Activated T-helper 1 cell treated with anti-CD3 and anti-CD28 coated beads, Interleukin-12 subunit alpha, Interleukin-12 subunit beta, Interleukin-2, Interleukin-4 antibody, amounts not matched to agents 30 ng/mL and 10 ng/mL and 1 ng/mL, durations not matched to agents 14 hours and 24 hours and 36 hours (primary cell): ENCODE measurements at regions of chr7 and their contacts with region 1.

Region 1: DNA sequence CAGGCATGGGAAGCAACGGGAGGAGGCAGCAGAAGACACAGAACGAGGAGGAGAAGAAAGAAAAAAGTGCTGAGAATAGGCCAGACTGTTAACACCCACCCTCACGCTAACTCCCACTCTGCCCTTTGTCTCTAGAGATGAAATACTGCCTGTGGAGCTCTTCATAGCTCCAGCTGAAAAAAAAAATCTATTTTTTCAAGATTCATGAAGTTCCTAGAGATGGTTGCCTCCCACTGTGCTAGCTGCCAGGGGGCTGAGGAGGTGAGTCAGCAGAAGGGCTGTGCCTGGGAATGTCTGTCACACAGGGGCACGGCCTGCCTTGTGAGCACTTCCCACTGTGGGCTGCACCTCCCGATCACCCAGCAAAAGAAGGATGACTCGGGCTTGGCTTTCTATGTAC is 144.5 kb downstream of the RNF216 start:
- DNase-seq: no peak
- H3K4me3 Mint-ChIP-seq: no peak overlapping the region
- H3K27ac Mint-ChIP-seq: no peak overlapping the region
- H3K4me1 Mint-ChIP-seq: peaks cover 5% of the 10 kb centered on the region
- H3K27me3 Mint-ChIP-seq: peaks cover 2% of the 10 kb centered on the region

Region 2: DNA sequence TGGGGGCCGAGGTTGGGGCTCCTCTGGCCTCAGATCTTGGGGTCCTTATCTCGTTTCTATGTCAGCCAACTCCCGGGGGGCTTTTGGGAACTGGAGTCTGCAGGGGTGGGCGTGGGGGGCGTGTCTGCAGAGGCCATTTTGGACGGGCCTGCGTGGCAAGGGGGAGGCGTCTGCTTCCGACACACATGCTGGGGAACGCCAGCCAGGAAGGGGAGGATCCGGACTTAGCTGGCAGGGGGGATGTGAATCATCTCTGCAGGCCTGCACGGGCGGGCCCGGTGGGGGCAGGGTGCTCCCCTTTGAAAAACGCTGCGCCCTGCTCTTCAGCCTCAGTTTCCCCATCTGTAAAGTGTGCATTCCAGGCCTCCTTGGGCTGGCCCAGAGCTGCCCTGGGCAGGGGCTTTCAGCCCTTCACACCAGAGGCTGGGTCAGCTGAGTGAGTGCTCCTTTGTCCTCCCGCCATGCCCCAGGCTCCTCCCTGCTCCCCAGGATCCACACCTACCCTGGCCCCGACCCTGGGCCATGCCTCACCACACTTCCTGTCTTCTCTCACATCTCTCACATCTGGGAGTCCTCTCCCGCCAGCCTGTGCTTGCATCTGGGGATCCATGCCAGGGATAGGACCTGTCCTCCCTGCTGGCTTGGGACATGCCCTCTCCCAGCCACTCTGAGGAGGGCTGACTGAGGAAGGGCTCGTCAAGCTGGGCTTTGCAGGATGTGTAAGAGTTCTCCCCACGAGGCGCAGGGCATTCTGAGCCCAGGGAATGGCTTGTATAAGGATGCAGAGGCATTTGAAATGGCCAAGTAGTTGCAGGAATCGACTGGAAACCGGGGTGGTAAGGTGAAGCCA is 40.6 kb before region 1 on chr7:
- intact Hi-C with region 1: loop called (anchors 5 kb)
- DNase-seq: peak; percentile 56
- H3K4me3 Mint-ChIP-seq: peak overlapping the region; percentile 75
- H3K27ac Mint-ChIP-seq: peak overlapping the region; percentile 91
- H3K4me1 Mint-ChIP-seq: peaks cover 21% of the 10 kb centered on the region
- H3K27me3 Mint-ChIP-seq: peaks cover 17% of the 10 kb centered on the region

Region 3: DNA sequence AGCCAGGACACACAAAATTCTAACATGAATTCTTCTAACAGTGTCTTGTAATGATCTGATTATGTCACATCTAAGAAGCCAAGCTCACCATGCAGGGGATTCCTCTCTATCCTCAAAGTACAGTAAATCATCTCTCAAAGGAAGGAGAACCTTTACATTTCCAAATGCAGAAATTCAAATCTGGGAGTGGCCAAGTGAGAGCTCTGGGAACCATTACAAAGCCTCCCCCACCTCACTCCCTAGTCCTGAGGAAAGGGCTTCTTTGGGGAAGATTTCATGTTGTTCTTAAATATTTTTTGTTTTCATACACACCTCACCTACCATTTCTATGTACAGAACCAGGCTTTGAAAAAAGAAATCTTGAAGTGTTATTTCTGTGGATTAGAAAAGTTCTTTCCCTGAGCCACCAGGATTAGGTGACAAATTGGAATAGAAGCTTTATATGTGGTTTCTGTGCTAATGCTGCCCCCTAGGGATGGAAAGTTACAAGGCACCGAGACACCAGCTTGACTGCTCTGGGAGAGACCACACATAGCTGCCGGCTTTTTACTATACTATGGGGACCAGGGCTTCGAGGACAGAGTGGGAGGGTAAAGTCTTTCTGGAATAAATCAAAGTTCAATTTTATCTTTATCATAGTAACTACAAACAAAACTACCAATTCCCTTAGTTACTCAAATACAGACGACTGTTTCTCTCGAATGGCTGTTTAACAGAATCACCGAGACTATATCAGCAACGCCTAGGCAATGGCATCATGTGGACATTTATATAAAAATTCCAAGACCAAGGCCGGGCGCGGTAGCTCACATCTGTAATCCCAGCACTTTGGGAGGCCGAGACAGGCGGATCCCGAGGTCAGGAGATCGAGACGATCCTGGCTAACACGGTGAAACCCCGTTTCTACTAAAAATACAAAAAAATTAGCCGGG is 28.4 kb after region 1 on chr7:
- intact Hi-C with region 1: loop called (anchors 2 kb)
- DNase-seq: peak; percentile 59
- H3K4me3 Mint-ChIP-seq: no peak overlapping the region
- H3K27ac Mint-ChIP-seq: no peak overlapping the region
- H3K4me1 Mint-ChIP-seq: peaks cover 23% of the 10 kb centered on the region
- H3K27me3 Mint-ChIP-seq: no peaks in the 10 kb centered on the region

Region 4: GRCh38 chr7:5689118-5689517 is 52.2 kb after region 1 on chr7:
- intact Hi-C with region 1: loop called (anchors 1 kb)
- DNase-seq: peak; percentile 50
- H3K4me3 Mint-ChIP-seq: peak overlapping the region; percentile 47
- H3K27ac Mint-ChIP-seq: peak overlapping the region; percentile 83
- H3K4me1 Mint-ChIP-seq: peaks cover 79% of the 10 kb centered on the region
- H3K27me3 Mint-ChIP-seq: peaks cover 25% of the 10 kb centered on the region

Region 5: GRCh38 chr7:5694912-5695726 is 58.2 kb after region 1 on chr7:
- intact Hi-C with region 1: loop called (anchors 2 kb)
- DNase-seq: peak; percentile 79
- H3K4me3 Mint-ChIP-seq: peak overlapping the region; percentile 84
- H3K27ac Mint-ChIP-seq: peak overlapping the region; percentile 95
- H3K4me1 Mint-ChIP-seq: peaks cover 93% of the 10 kb centered on the region
- H3K27me3 Mint-ChIP-seq: peaks cover 25% of the 10 kb centered on the region